ENCODE measurements at regions of chr7 and their contacts with region 1.

Region 1: GRCh38 chr7:1130021-1130990 is 29.7 kb downstream of the ZFAND2A start:
- DNase-seq: no peak
- ATAC-seq: no peak
- H3K4me3 ChIP-seq: no peak overlapping the region
- H3K27ac ChIP-seq: no peak overlapping the region
- H3K4me1 ChIP-seq: peaks cover 4% of the 10 kb centered on the region
- H3K27me3 ChIP-seq: no peaks in the 10 kb centered on the region
- CTCF ChIP-seq: no peak
- POLR2A ChIP-seq: no peak

Region 2: GRCh38 chr7:1004018-1004852 is 126.1 kb before region 1 on chr7:
- intact Hi-C with region 1: no loop called
- DNase-seq: no peak
- ATAC-seq: no peak
- H3K4me3 ChIP-seq: no peak overlapping the region
- H3K27ac ChIP-seq: no peak overlapping the region
- H3K4me1 ChIP-seq: no peaks in the 10 kb centered on the region
- H3K27me3 ChIP-seq: no peaks in the 10 kb centered on the region
- CTCF ChIP-seq: no peak
- POLR2A ChIP-seq: no peak

Region 3: GRCh38 chr7:1169409-1170368 is 39.4 kb after region 1 on chr7:
- intact Hi-C with region 1: loop called (anchors 5 kb)
- DNase-seq: peak; percentile 84 to 92 (median 86)
- ATAC-seq: peak; percentile 94
- H3K4me3 ChIP-seq: no peak overlapping the region
- H3K27ac ChIP-seq: peak overlapping the region in 3 of 4 donors; percentile 24 to 35 (median 27)
- H3K4me1 ChIP-seq: peaks cover 7% of the 10 kb centered on the region
- H3K27me3 ChIP-seq: no peaks in the 10 kb centered on the region
- CTCF ChIP-seq: peak; percentile 73 to 91 (median 83)
- POLR2A ChIP-seq: peak in 1 of 3 donors; percentile 39

Measured in body of pancreas (tissue), 4 donors.